Activated CD4-positive, alpha-beta T cell treated with anti-CD3 and anti-CD28 coated beads for 36 hours (primary cell): ENCODE measurements at regions of chr17 and their contacts with region 1.

Region 1: GRCh38 chr17:48878918-48879898 is 13.4 kb upstream of the ATP5MC1 start:
- DNase-seq: peak; percentile 64
- ATAC-seq: peak; percentile 90
- H3K4me3 Mint-ChIP-seq: no peak overlapping the region
- H3K27ac Mint-ChIP-seq: no peak overlapping the region
- H3K4me1 Mint-ChIP-seq: no peaks in the 10 kb centered on the region
- H3K27me3 Mint-ChIP-seq: peaks cover 5% of the 10 kb centered on the region

Region 2: DNA sequence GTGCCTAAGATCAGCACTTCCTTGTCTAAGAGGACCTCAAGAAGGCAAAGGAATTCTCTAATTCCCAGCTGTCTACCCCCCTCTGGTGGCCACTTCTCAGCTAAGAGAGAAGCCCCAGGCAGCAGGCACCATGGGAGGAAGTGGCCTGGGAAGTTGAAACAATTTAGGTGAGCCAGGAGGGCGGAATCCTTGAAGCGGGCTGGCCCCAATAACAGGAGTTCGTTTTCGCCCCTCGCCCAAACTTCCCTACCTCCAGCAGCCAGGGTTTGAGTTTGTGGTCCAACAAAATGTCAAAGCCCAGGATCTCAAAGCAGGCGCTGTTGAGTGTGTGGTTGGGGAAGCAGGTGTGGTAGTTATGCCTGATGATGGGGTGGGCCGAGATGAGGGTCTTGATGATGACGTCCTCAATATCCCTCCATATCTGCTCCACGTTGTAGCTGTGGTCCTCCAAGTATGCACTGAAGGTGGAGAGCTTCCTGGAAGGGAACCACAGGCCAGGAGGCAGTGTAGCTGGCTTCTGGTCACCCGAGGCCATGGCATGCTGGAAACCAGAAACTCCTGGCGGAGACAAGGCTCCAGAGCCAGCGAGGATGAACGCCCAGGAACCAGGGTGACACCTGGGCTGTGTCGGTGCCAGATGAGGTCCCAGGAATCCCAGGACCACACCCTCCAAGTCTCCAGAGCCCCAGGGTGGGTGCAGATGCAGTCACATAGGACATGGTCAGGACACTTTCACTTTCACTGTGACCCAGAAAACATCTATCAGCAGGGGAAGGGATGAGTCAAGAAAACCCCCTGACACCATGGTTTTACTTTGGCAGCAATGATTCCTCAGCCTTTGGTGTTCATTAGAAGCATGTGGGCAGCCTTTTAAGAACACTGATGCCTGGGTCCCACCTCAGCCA is 87.8 kb before region 1 on chr17:
- CTCF ChIA-PET with region 1: interaction called, 14 read pairs
- POLR2A ChIA-PET with region 1: no interaction called
- intact Hi-C with region 1: no loop called
- DNase-seq: peak; percentile 46
- ATAC-seq: peak; percentile 84
- H3K4me3 Mint-ChIP-seq: no peak overlapping the region
- H3K27ac Mint-ChIP-seq: no peak overlapping the region
- H3K4me1 Mint-ChIP-seq: no peaks in the 10 kb centered on the region
- H3K27me3 Mint-ChIP-seq: peaks cover 30% of the 10 kb centered on the region

Region 3: DNA sequence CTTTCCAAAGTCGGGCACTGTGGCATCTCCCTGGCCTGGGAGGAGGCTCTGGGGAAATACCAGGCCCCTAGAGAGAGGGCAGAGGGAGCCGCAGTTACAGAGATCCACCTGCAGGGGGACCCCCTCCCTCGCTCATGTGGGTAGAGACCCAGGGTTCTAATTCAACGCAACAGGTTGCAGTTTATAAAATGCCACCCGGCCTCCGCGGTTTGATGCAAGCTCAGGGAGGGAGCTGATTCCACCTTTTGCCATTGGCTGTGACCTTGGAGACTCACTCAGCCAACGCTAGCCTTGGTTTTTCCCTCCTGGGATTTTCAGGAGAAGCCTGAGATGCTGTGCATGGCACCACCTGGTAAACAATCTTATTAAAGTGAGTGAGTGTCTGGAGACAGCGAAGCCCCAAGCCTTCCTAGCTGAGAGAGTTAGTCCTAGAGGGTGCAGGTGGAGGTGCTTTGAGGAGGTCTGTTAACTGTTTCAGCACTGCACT is 74.2 kb before region 1 on chr17:
- CTCF ChIA-PET with region 1: interaction called, 203 read pairs
- POLR2A ChIA-PET with region 1: no interaction called
- intact Hi-C with region 1: loop called (anchors 1 kb)
- DNase-seq: peak; percentile 82
- ATAC-seq: peak; percentile 78
- H3K4me3 Mint-ChIP-seq: no peak overlapping the region
- H3K27ac Mint-ChIP-seq: no peak overlapping the region
- H3K4me1 Mint-ChIP-seq: peaks cover 2% of the 10 kb centered on the region
- H3K27me3 Mint-ChIP-seq: peaks cover 9% of the 10 kb centered on the region

Region 4: GRCh38 chr17:48825446-48826381 is 53.5 kb before region 1 on chr17:
- CTCF ChIA-PET with region 1: interaction called, 11 read pairs
- POLR2A ChIA-PET with region 1: no interaction called
- intact Hi-C with region 1: no loop called
- DNase-seq: no peak
- ATAC-seq: no peak
- H3K4me3 Mint-ChIP-seq: no peak overlapping the region
- H3K27ac Mint-ChIP-seq: no peak overlapping the region
- H3K4me1 Mint-ChIP-seq: peaks cover 5% of the 10 kb centered on the region
- H3K27me3 Mint-ChIP-seq: peaks cover 5% of the 10 kb centered on the region

Region 5: DNA sequence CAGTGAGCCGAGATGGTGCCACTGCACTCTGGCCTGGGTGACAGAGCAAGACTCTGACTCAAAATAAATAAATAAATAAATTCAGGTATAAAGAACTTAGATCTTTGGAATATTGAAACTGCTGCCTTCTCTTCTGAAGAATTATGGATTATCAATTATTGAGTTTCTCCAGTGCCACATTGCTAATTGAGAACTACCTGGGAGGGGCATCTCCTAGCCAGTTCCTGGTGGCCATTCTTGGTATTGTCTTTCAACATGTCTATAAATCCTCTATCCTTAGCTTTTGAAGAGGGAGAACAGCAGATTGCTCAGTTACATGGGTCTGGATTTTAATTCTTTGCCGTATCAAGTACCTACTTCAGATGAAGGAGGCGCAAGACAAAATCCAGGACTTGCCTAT is 19.2 kb before region 1 on chr17:
- CTCF ChIA-PET with region 1: interaction called, 26 read pairs
- POLR2A ChIA-PET with region 1: no interaction called
- intact Hi-C with region 1: no loop called
- DNase-seq: no peak
- ATAC-seq: no peak
- H3K4me3 Mint-ChIP-seq: no peak overlapping the region
- H3K27ac Mint-ChIP-seq: no peak overlapping the region
- H3K4me1 Mint-ChIP-seq: no peaks in the 10 kb centered on the region
- H3K27me3 Mint-ChIP-seq: no peaks in the 10 kb centered on the region